Right cardiac atrium (tissue), 5 donors: ENCODE measurements at regions of chr4 and their contacts with region 1.

Region 1: GRCh38 chr4:109433205-109434006 is at the start of gene SEC24B:
- DNase-seq: peak; percentile 93 to 97 (median 96)
- ATAC-seq: peak; percentile 96
- H3K4me3 ChIP-seq: peak within 1 kb of the TSS; percentile 92
- H3K27ac ChIP-seq: peak within 1 kb of the TSS; percentile 71
- H3K4me1 ChIP-seq: peaks cover 4% of the 10 kb centered on the region
- H3K27me3 ChIP-seq: no peaks in the 10 kb centered on the region
- total RNA-seq, gene SEC24B: 26.6 to 34.3 (median 28.2) TPM

Region 2: GRCh38 chr4:109497511-109497910 is 64.1 kb after region 1 on chr4:
- intact Hi-C with region 1: loop called in 1 of 4 experiments (anchors 10 kb)
- DNase-seq: no peak
- ATAC-seq: no peak
- H3K4me3 ChIP-seq: no peak overlapping the region
- H3K27ac ChIP-seq: no peak overlapping the region
- H3K4me1 ChIP-seq: peaks cover 2% of the 10 kb centered on the region
- H3K27me3 ChIP-seq: no peaks in the 10 kb centered on the region

Region 3: DNA sequence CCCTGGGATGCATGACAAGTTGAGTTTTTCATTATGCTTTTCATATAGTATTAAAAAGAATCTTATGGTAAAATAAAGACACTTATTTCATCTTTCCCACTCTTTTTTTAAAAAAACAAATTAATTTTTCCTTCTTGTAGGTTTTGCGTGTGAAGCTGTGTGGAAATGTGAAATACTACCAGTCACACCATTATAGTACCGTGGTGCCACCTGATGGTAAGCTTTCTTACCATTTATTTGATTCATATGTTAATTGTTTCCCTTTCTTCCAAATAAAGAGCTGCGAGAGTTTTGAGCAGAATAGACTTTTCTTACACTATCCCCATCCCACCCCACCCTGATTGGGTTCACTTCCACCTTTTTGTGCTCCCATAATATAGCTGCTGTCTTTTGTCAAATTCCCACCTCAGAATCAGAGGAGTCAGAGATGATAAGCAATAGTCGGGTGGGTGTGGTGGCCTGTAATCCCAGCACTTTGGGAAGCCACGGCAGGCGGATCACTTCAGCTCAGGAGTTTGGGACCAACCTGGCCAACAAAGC is 225.5 kb after region 1 on chr4:
- intact Hi-C with region 1: loop called (anchors 5 to 10 kb)
- DNase-seq: no peak
- ATAC-seq: no peak
- H3K4me3 ChIP-seq: no peak overlapping the region
- H3K27ac ChIP-seq: no peak overlapping the region
- H3K4me1 ChIP-seq: no peaks in the 10 kb centered on the region
- H3K27me3 ChIP-seq: no peaks in the 10 kb centered on the region

Region 4: DNA sequence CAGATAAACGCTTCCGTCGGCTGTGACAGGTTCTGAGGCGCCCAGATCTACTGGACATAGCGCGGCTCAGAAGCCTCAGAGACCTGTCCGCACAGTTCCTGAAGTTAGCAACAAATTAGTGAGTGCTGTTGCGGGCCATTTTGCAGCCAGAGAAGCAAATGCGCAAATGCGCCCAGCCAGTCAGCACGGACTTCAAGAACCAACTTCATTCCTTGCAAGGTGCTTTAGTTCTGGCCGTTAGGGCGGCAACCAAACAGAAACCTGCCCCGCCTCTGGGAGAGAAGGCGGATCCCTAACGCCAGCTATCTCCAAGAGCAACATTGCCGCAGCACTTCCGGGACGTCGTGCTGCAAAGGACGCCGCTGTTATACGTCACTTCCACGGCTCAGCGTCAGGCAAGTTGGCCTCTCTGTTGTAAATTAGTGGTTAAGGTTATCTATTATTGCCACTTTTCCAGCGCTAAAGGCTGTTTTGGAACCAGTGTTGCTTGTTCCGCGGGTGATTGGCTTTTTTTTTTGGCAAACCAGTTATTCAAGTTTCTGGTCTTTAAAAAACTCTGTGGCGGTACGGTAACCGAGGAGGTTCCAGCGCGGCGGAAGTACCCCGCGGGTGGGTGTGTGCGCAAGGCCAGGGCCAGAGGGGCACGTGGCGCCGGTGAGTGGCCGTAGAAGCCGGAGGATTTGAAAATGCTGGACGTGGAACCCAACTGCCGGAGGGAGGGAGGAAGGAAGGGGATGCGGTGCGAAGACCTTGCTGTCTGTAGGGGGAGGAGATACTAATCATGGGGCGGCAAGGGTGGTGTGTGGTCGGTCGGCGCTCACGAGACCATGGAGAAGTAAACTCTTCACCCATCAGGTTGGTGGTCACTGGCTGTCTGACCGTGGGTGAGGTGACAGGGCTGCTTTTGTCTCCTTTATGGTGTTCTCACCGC is 382.0 kb after region 1 on chr4 and contains the start of gene GAR1:
- intact Hi-C with region 1: loop called (anchors 5 to 10 kb)
- DNase-seq: peak; percentile 92 to 96 (median 93)
- ATAC-seq: peak; percentile 99
- H3K4me3 ChIP-seq: peak within 1 kb of the TSS; percentile 83
- H3K27ac ChIP-seq: peak within 1 kb of the TSS; percentile 45
- H3K4me1 ChIP-seq: no peaks in the 10 kb centered on the region
- H3K27me3 ChIP-seq: no peaks in the 10 kb centered on the region
- total RNA-seq, gene GAR1: 6.5 to 10.1 (median 8.7) TPM